ENCODE measurements at regions of chr21 and their contacts with region 1.

Region 1: DNA sequence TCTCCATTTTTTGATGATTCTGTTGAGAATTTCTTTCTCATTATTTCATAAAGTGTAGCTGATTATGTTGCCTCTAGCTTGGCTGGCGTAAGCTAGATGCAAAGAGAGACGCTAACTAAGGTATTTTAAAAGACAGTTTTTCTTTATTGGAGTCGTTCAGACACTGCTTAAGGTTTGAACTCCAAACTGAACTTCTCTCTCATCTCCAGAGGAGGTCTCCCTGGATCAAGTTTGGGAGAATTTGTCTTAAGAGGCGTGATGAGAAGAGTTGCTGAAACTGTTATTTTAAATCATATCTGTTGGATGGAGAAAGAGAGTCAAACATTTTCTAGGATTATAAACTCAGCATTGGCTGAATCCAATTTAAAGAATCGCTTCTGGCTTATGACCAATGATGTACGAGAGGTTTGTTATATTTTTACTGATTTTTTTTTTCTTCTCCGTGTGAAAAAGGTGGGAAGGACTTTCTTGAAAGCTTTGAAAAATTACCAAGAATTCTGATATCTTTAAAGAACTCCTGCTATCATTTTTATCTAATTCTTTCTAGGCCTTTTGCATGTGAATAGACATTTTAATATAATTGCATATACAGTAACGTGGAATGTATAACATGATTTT is 34.0 kb downstream of the MAP3K7CL start:
- DNase-seq: no peak
- H3K4me3 ChIP-seq: no peak overlapping the region
- H3K27ac ChIP-seq: no peak overlapping the region
- H3K4me1 ChIP-seq: no peaks in the 10 kb centered on the region
- H3K27me3 ChIP-seq: peaks cover 2% of the 10 kb centered on the region
- CTCF ChIP-seq: peak; percentile 53 to 72 (median 64)
- EP300 ChIP-seq: no peak
- POLR2A ChIP-seq: no peak

Region 2: DNA sequence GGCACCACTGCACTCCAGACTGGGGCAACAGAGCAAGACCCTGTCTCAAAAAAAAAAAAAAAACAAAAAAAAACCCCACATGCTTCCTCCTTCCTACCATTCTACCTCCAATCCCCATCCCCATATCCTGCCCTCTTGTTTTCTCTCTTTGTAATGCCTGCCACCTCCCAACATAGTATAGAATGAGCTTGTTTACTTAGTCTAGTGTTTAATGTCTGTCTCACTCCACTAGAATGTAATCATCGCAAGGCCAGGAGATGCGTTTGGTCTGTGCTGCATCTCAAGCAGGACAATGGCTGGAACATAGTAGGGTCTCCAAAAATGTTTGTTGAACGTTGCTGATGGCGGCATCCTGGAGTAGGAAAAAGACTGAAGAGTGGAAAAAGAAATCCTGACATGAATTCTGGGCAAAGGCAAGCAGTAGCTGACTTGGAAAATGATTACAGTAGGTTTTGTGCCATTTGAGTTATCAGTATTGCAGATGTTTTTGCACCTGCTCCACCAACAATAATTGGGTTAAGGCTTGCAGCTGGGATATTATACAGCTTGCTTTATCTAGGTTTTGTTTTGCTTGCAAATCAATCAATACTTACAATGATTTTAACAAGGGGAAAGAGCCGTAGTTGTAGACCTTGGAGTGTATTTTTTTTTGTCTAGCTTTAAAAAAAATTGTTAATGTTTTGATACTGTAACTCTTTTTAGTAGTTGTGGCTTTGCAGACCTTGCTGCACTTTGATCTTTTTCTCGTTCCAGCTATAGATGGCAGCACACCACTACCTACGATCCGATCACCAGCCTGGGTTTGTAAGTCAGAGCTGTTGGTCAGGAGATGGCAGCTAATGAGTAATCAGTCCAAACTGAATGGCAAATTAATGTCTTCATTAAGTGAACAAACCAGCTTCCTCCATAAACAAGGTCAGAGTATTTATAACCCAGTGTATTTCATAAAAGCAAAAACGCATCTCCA is 196.6 kb after region 1 on chr21:
- intact Hi-C with region 1: loop called in 1 of 4 experiments (anchors 10 kb)
- DNase-seq: no peak
- H3K4me3 ChIP-seq: no peak overlapping the region
- H3K27ac ChIP-seq: no peak overlapping the region
- H3K4me1 ChIP-seq: no peaks in the 10 kb centered on the region
- H3K27me3 ChIP-seq: no peaks in the 10 kb centered on the region
- CTCF ChIP-seq: no peak
- EP300 ChIP-seq: no peak
- POLR2A ChIP-seq: no peak

Region 3: DNA sequence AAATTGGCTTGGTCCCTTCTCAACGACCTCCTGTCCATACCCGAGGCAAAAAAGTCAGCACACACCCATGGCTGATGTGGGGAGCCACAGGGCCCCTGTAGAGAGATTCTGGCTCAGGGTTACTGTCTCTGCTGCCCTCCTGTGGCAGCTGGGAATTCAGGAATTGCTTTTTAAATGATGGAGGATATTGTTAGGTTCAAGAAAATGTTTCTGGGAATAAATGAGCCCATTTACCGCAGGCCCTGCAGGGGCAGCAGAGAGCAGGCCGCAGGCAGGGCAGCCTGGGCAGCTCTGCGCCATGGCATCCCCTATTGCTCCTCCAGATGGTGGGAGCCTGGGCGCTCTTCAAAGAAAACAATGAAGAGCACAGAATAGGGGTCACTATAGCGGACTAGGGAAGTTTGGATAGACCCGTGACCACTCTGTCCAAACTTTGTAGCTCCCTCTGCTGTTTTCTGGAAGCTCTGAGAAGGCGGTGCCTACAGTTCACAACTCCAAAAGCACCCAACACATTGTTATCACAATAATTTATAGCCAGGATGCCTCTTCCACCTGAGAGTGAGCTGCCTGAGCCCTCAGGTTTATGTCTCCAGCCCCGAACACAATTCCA is 335.4 kb after region 1 on chr21:
- intact Hi-C with region 1: no loop called
- DNase-seq: no peak
- H3K4me3 ChIP-seq: no peak overlapping the region
- H3K27ac ChIP-seq: no peak overlapping the region
- H3K4me1 ChIP-seq: no peaks in the 10 kb centered on the region
- H3K27me3 ChIP-seq: no peaks in the 10 kb centered on the region
- CTCF ChIP-seq: no peak
- EP300 ChIP-seq: no peak
- POLR2A ChIP-seq: no peak